ENCODE measurements at regions of chr15 and their contacts with region 1.

Region 1: GRCh38 chr15:49235446-49236124 is 65.5 kb downstream of the GALK2 start:
- DNase-seq: peak; percentile 40 to 42
- ATAC-seq: peak; percentile 86 to 89
- H3K4me3 ChIP-seq: no peak overlapping the region
- H3K27ac ChIP-seq: no peak overlapping the region
- H3K4me1 ChIP-seq: peaks cover 6 to 22% of the 10 kb centered on the region in 2 donors
- H3K27me3 ChIP-seq: no peaks in the 10 kb centered on the region
- CTCF ChIP-seq: peak; percentile 64 to 88 (median 77)
- POLR2A ChIP-seq: no peak

Region 2: GRCh38 chr15:48800811-48801455 is 434.7 kb before region 1 on chr15:
- in situ Hi-C with region 1: no loop called
- intact Hi-C with region 1: no loop called
- DNase-seq: no peak
- ATAC-seq: peak in 1 of 2 donors; percentile 33
- H3K4me3 ChIP-seq: no peak overlapping the region
- H3K27ac ChIP-seq: no peak overlapping the region
- H3K4me1 ChIP-seq: no peaks in the 10 kb centered on the region
- H3K27me3 ChIP-seq: no peaks in the 10 kb centered on the region
- CTCF ChIP-seq: peak in 2 of 5 experiments; percentile 23 to 36
- POLR2A ChIP-seq: no peak

Region 3: DNA sequence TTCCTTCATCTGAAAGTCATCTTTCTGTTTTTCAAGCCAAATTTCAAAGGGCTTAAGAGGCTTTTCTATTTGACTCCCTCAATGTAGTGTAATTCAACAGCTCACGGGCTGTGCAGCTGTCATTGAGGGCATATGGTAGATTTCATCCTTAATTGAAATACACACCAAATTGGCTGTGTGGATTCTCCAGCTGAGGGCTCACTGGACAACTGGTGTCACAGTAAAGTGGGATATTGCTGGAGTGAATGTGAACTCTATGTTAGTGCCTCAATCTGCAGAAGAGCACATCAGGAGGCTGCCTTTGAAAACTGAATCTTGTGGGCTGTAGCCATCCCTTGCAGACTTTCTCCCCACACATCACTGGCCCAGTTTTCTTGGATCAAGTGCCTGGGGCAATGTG is 54.6 kb after region 1 on chr15:
- in situ Hi-C with region 1: loop called in 1 of 4 experiments (anchors 10 kb)
- intact Hi-C with region 1: no loop called
- DNase-seq: no peak
- ATAC-seq: no peak
- H3K4me3 ChIP-seq: no peak overlapping the region
- H3K27ac ChIP-seq: no peak overlapping the region
- H3K4me1 ChIP-seq: peaks cover 6 to 12% of the 10 kb centered on the region in 2 donors
- H3K27me3 ChIP-seq: no peaks in the 10 kb centered on the region
- CTCF ChIP-seq: no peak
- POLR2A ChIP-seq: no peak

Region 4: DNA sequence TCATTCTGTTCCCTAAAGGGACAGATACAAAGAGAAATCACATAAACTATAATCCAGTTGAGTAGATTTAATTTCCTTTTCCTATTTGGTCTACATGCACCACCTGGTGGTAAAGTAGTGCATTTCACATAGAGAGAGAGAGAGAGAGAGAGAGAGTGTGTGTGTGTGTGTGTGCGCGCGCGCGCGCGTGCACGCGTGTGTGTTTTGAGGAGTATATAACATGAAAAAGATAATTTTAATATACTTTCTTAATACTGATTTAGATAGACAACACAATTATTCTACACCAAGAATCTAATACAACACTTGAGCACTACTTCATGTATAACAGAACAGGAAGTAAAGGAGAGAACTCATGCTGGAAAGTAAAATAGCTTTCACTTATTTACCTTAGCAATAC is 186.4 kb after region 1 on chr15:
- in situ Hi-C with region 1: loop called in 3 of 4 experiments (anchors 5 to 10 kb)
- intact Hi-C with region 1: loop called (anchors 1 kb)
- DNase-seq: peak in 1 of 2 donors; percentile 20
- ATAC-seq: peak; percentile 51 to 92
- H3K4me3 ChIP-seq: peak overlapping the region; percentile 30 to 40 (median 38)
- H3K27ac ChIP-seq: peak overlapping the region; percentile 1 to 59 (median 19)
- H3K4me1 ChIP-seq: no peaks in the 10 kb centered on the region
- H3K27me3 ChIP-seq: no peaks in the 10 kb centered on the region
- CTCF ChIP-seq: peak; percentile 81 to 96 (median 82)
- POLR2A ChIP-seq: no peak

Region 5: DNA sequence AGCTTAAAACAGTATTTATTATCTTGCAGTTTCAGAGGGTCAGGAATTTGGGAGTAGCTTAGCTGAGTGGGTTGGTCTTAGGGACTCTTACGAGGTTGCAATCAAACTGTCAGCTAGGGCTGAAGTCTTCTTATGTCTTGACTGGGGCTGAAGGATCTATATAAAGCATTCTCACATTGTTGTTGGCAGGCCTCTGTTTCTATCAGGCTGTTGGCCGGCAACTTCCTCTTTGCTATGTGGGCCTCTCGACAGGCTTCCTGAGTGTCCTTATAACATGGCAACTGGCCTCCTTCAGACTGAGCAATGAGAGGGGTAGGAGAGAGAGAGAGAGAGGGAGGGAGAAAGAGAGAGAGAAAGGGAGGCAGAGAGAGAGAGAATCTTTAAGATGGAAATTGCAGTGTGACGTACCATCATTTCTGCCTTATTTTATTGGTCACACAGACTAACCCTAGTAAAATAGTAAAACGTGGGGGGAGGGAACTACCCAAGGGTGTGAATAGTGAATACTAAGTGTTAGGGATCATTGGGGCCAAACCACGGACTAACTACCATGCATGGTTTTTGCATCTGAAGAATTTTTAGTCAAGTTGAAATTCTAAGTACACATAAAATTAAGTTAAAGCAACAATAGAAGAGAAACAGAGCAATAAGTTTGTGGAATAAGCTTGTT is 203.5 kb after region 1 on chr15:
- in situ Hi-C with region 1: no loop called
- intact Hi-C with region 1: no loop called
- DNase-seq: peak; percentile 3 to 15
- ATAC-seq: no peak
- H3K4me3 ChIP-seq: no peak overlapping the region
- H3K27ac ChIP-seq: no peak overlapping the region
- H3K4me1 ChIP-seq: no peaks in the 10 kb centered on the region
- H3K27me3 ChIP-seq: no peaks in the 10 kb centered on the region
- CTCF ChIP-seq: no peak
- POLR2A ChIP-seq: no peak

Region 6: DNA sequence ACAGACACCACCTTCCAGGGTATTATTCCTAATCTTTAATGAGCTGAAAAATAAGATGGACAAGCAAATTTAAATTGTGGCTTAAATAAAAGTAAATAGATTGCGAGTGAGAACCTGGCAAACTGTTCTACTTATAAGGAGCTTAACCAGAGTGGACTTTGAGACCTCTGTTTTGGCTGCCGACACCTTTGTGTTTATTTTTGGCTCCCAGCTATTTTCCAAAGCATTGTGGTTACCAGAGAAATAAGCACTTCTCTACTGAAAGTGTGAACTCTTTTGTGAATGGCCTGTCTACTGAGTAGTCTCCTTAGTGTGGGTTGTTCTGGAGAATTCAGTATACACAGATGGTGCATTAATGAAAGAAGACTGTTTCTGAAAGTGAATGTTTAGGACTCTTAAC is 774.0 kb after region 1 on chr15:
- in situ Hi-C with region 1: no loop called
- intact Hi-C with region 1: loop called (anchors 5 kb)
- DNase-seq: no peak
- ATAC-seq: no peak
- H3K4me3 ChIP-seq: no peak overlapping the region
- H3K27ac ChIP-seq: no peak overlapping the region
- H3K4me1 ChIP-seq: no peaks in the 10 kb centered on the region
- H3K27me3 ChIP-seq: no peaks in the 10 kb centered on the region
- CTCF ChIP-seq: no peak
- POLR2A ChIP-seq: no peak

Region 7: GRCh38 chr15:50145451-50145872 is 909.9 kb after region 1 on chr15:
- in situ Hi-C with region 1: loop called in 2 of 4 experiments (anchors 10 to 25 kb)
- intact Hi-C with region 1: loop called (anchors 5 kb)
- DNase-seq: no peak
- ATAC-seq: peak; percentile 65 to 76
- H3K4me3 ChIP-seq: no peak overlapping the region
- H3K27ac ChIP-seq: no peak overlapping the region
- H3K4me1 ChIP-seq: no peaks in the 10 kb centered on the region
- H3K27me3 ChIP-seq: no peaks in the 10 kb centered on the region
- CTCF ChIP-seq: peak; percentile 30 to 62 (median 60)
- POLR2A ChIP-seq: no peak

Measured in gastrocnemius medialis (tissue), 4 donors.